ENCODE measurements at regions of chr17 and their contacts with region 1.

Region 1: GRCh38 chr17:41648411-41649195 is 24.2 kb upstream of the KRT17 start:
- DNase-seq: peak; percentile 94
- ATAC-seq: peak; percentile 88
- H3K4me3 ChIP-seq: peak overlapping the region; percentile 43
- H3K27ac ChIP-seq: no peak overlapping the region
- H3K4me1 ChIP-seq: peaks cover 15% of the 10 kb centered on the region
- H3K27me3 ChIP-seq: no peaks in the 10 kb centered on the region
- CTCF ChIP-seq: peak; percentile 94

Region 2: GRCh38 chr17:41548844-41549595 is 99.6 kb before region 1 on chr17:
- intact Hi-C with region 1: loop called (anchors 5 kb)
- DNase-seq: peak; percentile 92
- ATAC-seq: peak; percentile 92
- H3K4me3 ChIP-seq: peak overlapping the region; percentile 23
- H3K27ac ChIP-seq: peak overlapping the region; percentile 28
- H3K4me1 ChIP-seq: peaks cover 14% of the 10 kb centered on the region
- H3K27me3 ChIP-seq: no peaks in the 10 kb centered on the region
- CTCF ChIP-seq: peak; percentile 87

Region 3: DNA sequence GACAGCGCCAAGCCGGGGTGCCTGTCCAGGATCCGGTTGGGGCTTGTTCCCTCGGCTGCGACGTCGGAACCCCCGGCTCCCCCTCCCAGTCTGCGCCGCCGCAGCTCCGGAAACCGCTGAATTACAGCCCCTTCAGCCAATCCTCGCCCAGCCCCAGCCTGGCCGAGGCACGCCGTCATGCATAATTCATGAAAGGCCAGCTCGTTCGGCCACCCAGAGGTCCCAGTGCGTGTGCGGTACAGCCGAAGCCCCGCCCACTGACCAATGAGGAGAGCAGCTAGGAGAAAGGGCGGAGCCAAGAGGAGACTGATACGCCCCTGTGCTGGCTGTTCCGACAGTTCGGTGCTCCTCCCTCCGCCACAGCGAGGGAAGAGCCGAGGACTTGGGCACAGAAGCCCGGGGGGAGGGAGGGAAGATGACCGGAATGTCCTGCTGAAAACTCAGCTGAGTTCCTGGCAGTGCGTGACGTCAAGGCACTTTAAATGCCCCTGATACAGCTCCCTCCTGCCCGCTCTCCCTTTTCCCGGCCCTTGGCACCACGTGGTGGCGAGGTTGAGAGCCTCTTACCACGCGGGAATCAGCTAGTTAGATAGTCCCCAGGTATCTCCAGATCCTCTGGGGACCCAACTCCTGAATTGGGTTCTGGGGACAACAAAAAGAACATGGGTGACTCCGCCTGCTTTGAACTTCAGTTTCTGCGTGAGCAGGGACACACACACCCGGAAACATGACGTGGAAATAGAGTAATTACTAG is 740.0 kb after region 1 on chr17 and contains the start of gene STAT3:
- intact Hi-C with region 1: no loop called
- DNase-seq: peak; percentile 100
- ATAC-seq: peak; percentile 98
- H3K4me3 ChIP-seq: peak within 1 kb of the TSS; percentile 95
- H3K27ac ChIP-seq: peak within 1 kb of the TSS; percentile 100
- H3K4me1 ChIP-seq: peaks cover 40% of the 10 kb centered on the region
- H3K27me3 ChIP-seq: no peaks in the 10 kb centered on the region
- CTCF ChIP-seq: no peak
- total RNA-seq, gene STAT3: 309 TPM